ENCODE measurements at regions of chr17 and their contacts with region 1.

Region 1: GRCh38 chr17:80195731-80196529 is 24.2 kb downstream of the SGSH start:
- DNase-seq: peak; percentile 59
- H3K4me3 Mint-ChIP-seq: no peak overlapping the region
- H3K27ac Mint-ChIP-seq: no peak overlapping the region
- H3K4me1 Mint-ChIP-seq: no peaks in the 10 kb centered on the region
- H3K27me3 Mint-ChIP-seq: peaks cover 36% of the 10 kb centered on the region

Region 2: GRCh38 chr17:80252607-80253289 is 56.8 kb after region 1 on chr17:
- CTCF ChIA-PET with region 1: interaction called, 33 read pairs
- DNase-seq: peak; percentile 91
- H3K4me3 Mint-ChIP-seq: no peak overlapping the region
- H3K27ac Mint-ChIP-seq: no peak overlapping the region
- H3K4me1 Mint-ChIP-seq: peaks cover 55% of the 10 kb centered on the region
- H3K27me3 Mint-ChIP-seq: no peaks in the 10 kb centered on the region